ENCODE measurements at regions of chr10 and their contacts with region 1.

Region 1: GRCh38 chr10:124119946-124120345 is 26.5 kb upstream of the CHST15 start:
- DNase-seq: peak; percentile 32 to 37 (median 35)
- H3K4me3 ChIP-seq: peak overlapping the region in 1 of 3 experiments; percentile 15
- H3K4me3 Mint-ChIP-seq: no peak overlapping the region
- H3K27ac ChIP-seq: peak overlapping the region in 1 of 2 donors; percentile 3
- H3K27ac Mint-ChIP-seq: no peak overlapping the region
- H3K4me1 ChIP-seq: peaks cover 17 to 37% of the 10 kb centered on the region in 2 donors
- H3K4me1 Mint-ChIP-seq: peaks cover 15% of the 10 kb centered on the region
- H3K27me3 ChIP-seq: no peaks in the 10 kb centered on the region
- H3K27me3 Mint-ChIP-seq: peaks cover 0 to 13% (median 6%) of the 10 kb centered on the region in 3 donors
- CTCF ChIP-seq: no peak

Region 2: DNA sequence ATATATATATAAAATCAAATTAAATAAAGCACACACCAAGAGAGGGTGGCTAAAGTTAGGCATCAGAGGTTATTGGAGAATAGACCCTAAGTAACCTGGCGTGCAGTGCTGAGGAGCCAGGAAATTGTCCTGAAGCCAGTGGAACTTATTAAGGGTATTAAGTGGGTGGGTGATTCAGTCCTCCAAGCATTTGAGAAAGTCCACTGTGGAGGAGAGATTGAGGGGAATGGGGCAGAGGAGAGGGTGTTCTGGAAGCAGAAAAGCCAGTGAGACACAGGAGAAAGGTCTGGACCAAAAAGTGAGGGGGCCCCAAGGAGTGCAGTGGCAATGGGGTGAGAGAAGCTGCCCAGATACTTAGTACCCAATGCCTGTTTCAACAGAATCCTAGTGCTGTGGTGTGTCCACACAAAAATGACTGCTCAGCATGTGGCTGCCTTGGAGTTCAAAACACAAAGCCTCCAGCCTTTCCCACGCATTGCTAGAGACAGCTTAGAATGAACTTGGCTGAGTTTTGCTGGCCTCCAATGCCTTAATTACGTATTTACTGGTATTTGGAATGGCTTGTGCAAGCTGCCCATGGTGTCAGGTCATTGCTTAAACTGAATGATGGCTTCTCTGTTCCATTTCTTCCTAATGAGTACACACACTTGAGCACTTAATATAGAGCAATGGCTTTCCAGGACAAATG is 18.4 kb after region 1 on chr10:
- intact Hi-C with region 1: no loop called
- DNase-seq: no peak
- H3K4me3 ChIP-seq: no peak overlapping the region
- H3K4me3 Mint-ChIP-seq: no peak overlapping the region
- H3K27ac ChIP-seq: no peak overlapping the region
- H3K27ac Mint-ChIP-seq: no peak overlapping the region
- H3K4me1 ChIP-seq: peaks cover 11 to 13% of the 10 kb centered on the region in 2 donors
- H3K4me1 Mint-ChIP-seq: peaks cover 6% of the 10 kb centered on the region
- H3K27me3 ChIP-seq: no peaks in the 10 kb centered on the region
- H3K27me3 Mint-ChIP-seq: peaks cover 0 to 2% (median 0%) of the 10 kb centered on the region in 3 donors
- CTCF ChIP-seq: no peak

Region 3: GRCh38 chr10:124152916-124153826 is 33.2 kb after region 1 on chr10:
- intact Hi-C with region 1: loop called in 1 of 2 experiments (anchors 5 kb)
- DNase-seq: peak; percentile 80 to 89 (median 81)
- H3K4me3 ChIP-seq: peak overlapping the region in 1 of 3 experiments; percentile 59
- H3K4me3 Mint-ChIP-seq: no peak overlapping the region
- H3K27ac ChIP-seq: peak overlapping the region; percentile 65 to 74
- H3K27ac Mint-ChIP-seq: peak overlapping the region in 1 of 7 donors; percentile 68
- H3K4me1 ChIP-seq: peaks cover 52 to 71% of the 10 kb centered on the region in 2 donors
- H3K4me1 Mint-ChIP-seq: peaks cover 29% of the 10 kb centered on the region
- H3K27me3 ChIP-seq: no peaks in the 10 kb centered on the region
- H3K27me3 Mint-ChIP-seq: peaks cover 0 to 11% (median 8%) of the 10 kb centered on the region in 3 donors
- CTCF ChIP-seq: no peak